Posterior cingulate gyrus (tissue), 11 donors: ENCODE measurements at regions of chr16 and their contacts with region 1.

Region 1: DNA sequence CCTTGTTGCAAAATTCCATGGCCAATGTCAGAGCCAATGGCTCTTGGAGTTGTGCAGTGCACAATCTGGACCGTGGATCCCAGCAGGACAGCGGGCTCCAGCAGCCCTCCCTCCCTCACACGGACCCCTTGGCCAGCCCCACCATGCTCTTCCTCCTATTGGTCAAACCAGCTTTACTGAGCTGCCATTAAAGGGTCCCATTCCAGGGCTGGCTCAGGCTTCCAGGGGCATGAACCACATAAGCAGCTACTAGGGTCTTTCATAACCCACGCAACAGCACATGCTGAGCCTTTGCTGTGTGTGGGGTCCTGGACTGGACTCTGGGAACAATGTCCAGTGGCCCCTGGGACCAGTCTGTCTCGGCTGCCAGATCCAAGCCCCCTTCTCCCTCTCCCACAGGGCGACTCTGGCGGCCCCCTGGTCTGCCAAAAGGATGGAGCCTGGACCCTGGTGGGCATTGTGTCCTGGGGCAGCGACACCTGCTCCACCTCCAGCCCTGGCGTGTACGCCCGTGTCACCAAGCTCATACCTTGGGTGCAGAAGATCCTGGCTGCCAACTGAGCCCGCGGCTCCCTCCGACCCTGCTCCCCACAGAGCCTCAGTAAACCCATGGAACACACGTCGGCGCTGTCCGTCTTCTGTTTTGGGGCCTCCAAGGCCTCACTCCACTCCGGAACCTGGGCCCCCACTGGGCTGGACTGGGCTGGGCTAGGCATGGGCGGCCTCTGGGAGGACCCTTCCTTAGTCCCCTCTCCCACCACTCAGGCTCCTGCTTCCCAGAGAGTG is 5.7 kb downstream of the CTRB1 start:
- DNase-seq: no peak

Region 2: DNA sequence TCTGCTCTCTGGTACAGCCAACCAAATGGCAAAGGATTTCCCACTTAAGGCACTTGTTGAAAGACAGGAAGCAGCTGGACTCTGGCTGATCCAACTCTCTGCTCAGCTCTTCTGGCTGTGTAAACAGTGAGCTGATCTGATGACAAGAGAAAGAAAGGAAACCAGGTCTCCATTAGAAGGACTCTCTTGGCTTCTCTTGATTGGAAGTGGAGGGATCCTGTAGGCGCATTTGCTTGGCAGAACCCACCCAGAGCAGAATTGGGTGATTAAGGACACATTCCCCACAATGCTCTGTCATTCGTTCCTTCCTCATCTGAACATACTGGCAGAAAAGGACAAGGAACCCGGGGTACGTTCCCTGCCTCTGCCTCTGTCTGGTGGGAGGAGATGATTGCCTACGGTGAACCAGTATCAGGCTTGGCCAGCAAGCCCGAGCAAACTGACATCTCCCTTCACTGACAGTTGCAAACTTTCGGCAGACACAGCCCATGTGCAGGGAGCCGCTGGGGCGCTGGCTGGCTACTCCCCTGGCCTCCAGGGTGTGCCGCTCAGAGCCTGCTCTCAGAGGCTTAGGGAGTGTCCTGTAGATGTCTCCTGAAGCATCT is 137.0 kb before region 1 on chr16:
- intact Hi-C with region 1: no loop called
- DNase-seq: peak in 2 of 10 donors; percentile 79 to 82

Region 3: DNA sequence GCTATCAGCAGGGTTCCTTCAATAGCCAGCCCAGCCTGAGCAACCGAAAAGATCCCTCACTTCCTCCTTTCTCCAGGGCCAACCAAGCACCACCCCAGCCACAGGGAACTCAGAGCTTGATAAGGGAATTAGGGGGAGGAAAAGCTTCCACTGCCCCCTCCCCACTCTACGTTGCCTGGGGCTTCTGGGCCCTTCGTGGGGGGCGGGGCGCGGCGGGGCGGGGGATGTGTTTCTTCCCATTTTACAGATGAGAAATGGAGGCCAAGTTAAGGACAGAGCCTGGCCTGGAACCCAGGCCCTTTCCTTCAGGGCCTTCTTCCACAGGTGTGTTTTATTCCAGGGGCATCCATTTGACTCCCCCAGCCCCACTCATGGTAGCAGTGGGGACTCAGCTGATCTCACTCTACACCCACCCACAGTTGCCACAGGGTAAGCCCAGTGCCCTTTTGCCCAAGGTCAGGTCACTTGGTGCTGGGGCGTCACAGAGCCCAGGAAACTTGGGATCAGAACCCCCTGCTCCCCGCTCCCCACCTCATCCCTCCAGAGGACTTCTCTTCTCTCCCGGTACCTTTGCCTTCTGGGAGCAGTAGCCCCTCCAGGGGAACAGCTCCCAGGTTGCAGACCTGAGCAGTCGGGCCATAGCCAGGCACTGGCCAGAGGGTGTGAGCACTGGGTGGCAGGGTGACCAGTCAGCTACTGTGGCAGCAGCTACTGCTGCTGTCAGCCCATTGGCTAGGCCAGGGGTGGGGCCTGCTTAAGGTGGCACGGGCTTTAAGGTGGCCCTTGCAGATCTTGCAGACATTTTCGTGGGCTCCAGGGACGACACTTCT is 108.2 kb before region 1 on chr16 and contains the start of gene LDHD:
- intact Hi-C with region 1: no loop called
- DNase-seq: peak; percentile 87 to 99 (median 93)

Region 4: DNA sequence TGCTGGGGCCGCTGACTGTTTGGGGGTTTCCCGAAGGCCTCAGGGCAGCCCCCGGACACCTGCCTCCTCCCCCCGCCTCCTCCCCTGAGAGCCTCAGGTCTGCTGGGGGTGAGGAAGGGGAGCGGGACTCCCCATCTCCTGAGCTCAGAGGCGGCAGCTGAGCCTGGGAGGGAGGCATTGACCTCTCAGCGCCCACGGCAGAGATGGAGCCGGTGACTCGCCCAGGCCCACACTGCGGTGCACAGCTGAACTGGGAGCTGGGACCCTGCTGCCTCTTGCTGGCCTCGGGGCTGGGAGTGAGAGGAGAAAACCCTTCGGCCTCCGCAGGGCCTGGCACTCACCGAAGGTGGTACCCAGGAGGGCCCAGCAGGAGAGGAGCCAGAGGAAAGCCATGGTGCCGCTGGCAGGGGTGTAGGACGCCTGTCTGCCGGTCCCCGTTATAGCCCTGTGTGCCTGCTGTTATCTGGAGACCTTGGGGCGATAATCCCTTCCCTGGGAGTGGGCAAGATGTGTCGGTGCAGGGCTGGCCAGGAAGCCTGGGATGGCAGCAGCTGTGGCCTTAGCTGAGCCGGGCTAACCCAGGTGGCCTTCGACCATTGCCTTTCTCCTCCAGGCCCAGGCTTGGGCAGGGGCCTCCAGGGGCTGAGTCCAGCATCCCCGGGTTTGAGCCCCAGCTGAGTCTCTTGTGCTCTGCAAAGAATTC is 17.6 kb before region 1 on chr16 and contains the start of gene CTRB2:
- intact Hi-C with region 1: loop called (anchors 2 kb)
- DNase-seq: peak in 4 of 10 donors; percentile 23 to 80 (median 67)